Activated CD8-positive, alpha-beta T cell treated with anti-CD3 and anti-CD28 coated beads for 36 hours (primary cell): ENCODE measurements at regions of chrX and their contacts with region 1.

Region 1: DNA sequence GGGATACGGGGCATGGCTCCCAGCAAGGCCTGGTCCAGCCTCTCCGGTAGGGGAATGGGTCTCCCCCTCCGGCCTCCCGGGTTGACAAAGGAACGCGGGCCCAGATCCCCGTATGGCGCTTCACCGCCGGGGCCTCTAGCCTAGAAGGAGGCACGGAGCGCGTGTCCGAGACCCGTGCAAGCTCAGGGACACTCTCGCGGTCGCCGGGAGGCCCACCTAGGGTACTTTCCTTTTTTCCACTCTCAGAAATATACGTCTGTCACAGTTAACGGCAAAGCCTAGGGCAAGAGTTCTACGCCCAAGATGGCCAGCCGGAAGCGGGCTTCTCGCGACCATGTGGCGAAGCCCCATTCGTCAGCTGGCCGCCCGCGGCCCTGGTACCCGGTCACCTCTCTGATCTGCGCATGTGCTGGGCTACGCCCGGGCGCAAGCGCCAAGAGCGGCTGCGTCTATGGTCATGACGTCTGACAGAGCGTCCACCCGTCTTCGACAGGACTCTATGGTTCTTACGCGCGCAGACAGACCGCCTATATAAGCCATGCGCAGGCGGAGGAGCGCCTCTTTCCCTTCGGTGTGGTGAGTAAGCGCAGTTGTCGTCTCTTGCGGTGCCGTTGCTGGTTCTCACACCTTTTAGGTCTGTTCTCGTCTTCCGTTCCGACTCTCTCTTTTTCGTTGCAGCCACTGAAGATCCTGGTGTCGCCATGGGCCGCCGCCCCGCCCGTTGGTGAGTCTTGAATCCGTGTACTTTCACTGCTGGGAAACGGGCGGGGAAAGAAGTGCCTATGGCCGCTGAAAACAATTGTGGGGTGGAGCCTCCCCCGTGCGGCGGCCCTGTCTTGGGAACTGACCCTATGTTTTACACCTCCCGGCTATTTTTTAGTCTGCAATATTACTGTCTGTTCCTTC is at the start of gene RPL10:
- DNase-seq: peak; percentile 93
- ATAC-seq: peak; percentile 84
- H3K4me3 Mint-ChIP-seq: peak within 1 kb of the TSS; percentile 98
- H3K27ac Mint-ChIP-seq: peak within 1 kb of the TSS; percentile 100
- H3K4me1 Mint-ChIP-seq: peaks cover 2% of the 10 kb centered on the region
- H3K27me3 Mint-ChIP-seq: no peaks in the 10 kb centered on the region
- CTCF ChIP-seq: no peak
- total RNA-seq, gene RPL10: 3,574 to 3,675 TPM

Region 2: GRCh38 chrX:154298312-154298711 is 99.8 kb before region 1 on chrX:
- CTCF ChIA-PET with region 1: no interaction called
- POLR2A ChIA-PET with region 1: no interaction called
- intact Hi-C with region 1: no loop called
- DNase-seq: no peak
- ATAC-seq: no peak
- H3K4me3 Mint-ChIP-seq: no peak overlapping the region
- H3K27ac Mint-ChIP-seq: no peak overlapping the region
- H3K4me1 Mint-ChIP-seq: peaks cover 2% of the 10 kb centered on the region
- H3K27me3 Mint-ChIP-seq: no peaks in the 10 kb centered on the region
- CTCF ChIP-seq: no peak

Region 3: GRCh38 chrX:154333837-154334271 is 64.2 kb before region 1 on chrX:
- CTCF ChIA-PET with region 1: no interaction called
- POLR2A ChIA-PET with region 1: no interaction called
- intact Hi-C with region 1: no loop called
- DNase-seq: no peak
- ATAC-seq: peak; percentile 54
- H3K4me3 Mint-ChIP-seq: no peak overlapping the region
- H3K27ac Mint-ChIP-seq: peak overlapping the region; percentile 87
- H3K4me1 Mint-ChIP-seq: peaks cover 28% of the 10 kb centered on the region
- H3K27me3 Mint-ChIP-seq: no peaks in the 10 kb centered on the region
- CTCF ChIP-seq: no peak

Region 4: GRCh38 chrX:154348114-154348531 is 49.9 kb before region 1 on chrX:
- CTCF ChIA-PET with region 1: no interaction called
- POLR2A ChIA-PET with region 1: interaction called, 21 read pairs
- intact Hi-C with region 1: no loop called
- DNase-seq: no peak
- ATAC-seq: no peak
- H3K4me3 Mint-ChIP-seq: no peak overlapping the region
- H3K27ac Mint-ChIP-seq: peak overlapping the region; percentile 66
- H3K4me1 Mint-ChIP-seq: peaks cover 39% of the 10 kb centered on the region
- H3K27me3 Mint-ChIP-seq: no peaks in the 10 kb centered on the region
- CTCF ChIP-seq: no peak

Region 5: GRCh38 chrX:154378782-154379591 is 19.1 kb before region 1 on chrX and contains the start of gene EMD:
- CTCF ChIA-PET with region 1: interaction called, 9 read pairs
- POLR2A ChIA-PET with region 1: interaction called, 30 read pairs
- intact Hi-C with region 1: no loop called
- DNase-seq: peak; percentile 98
- ATAC-seq: peak; percentile 86
- H3K4me3 Mint-ChIP-seq: peak within 1 kb of the TSS; percentile 86
- H3K27ac Mint-ChIP-seq: peak within 1 kb of the TSS; percentile 91
- H3K4me1 Mint-ChIP-seq: peaks cover 18% of the 10 kb centered on the region
- H3K27me3 Mint-ChIP-seq: no peaks in the 10 kb centered on the region
- CTCF ChIP-seq: no peak
- total RNA-seq, gene EMD: 92.4 to 96.6 TPM

Region 6: DNA sequence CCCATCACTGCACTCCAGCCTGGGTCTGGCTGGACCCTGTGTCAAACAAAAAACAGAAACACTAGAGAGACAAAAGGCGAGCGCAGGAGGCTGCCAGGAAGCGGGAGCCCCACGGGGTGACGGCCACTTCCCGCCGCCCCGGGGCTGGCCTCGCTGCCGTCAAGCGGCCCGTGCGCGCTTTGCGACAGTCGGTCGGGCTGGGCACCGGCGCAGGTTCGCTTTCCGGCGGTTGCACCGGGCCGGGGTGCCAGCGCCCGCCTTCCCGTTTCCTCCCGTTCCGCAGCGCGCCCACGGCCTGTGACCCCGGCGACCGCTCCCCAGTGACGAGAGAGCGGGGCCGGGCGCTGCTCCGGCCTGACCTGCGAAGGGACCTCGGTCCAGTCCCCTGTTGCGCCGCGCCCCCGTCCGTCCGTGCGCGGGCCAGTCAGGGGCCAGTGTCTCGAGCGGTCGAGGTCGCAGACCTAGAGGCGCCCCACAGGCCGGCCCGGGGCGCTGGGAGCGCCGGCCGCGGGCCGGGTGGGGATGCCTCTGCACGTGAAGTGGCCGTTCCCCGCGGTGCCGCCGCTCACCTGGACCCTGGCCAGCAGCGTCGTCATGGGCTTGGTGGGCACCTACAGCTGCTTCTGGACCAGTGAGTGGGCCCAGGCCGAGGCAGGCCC is 13.4 kb after region 1 on chrX and contains the start of gene TAFAZZIN:
- CTCF ChIA-PET with region 1: interaction called, 3 read pairs
- POLR2A ChIA-PET with region 1: interaction called, 97 read pairs
- intact Hi-C with region 1: no loop called
- DNase-seq: peak; percentile 80
- ATAC-seq: peak; percentile 83
- H3K4me3 Mint-ChIP-seq: peak within 1 kb of the TSS; percentile 91
- H3K27ac Mint-ChIP-seq: peak within 1 kb of the TSS; percentile 94
- H3K4me1 Mint-ChIP-seq: peaks cover 10% of the 10 kb centered on the region
- H3K27me3 Mint-ChIP-seq: no peaks in the 10 kb centered on the region
- CTCF ChIP-seq: no peak
- total RNA-seq, gene TAFAZZIN: 49.8 to 53.4 TPM

Region 7: GRCh38 chrX:154478728-154479622 is 80.9 kb after region 1 on chrX and contains the start of gene LAGE3:
- CTCF ChIA-PET with region 1: no interaction called
- POLR2A ChIA-PET with region 1: interaction called, 14 read pairs
- intact Hi-C with region 1: no loop called
- DNase-seq: peak; percentile 94
- ATAC-seq: peak; percentile 93
- H3K4me3 Mint-ChIP-seq: peak within 1 kb of the TSS; percentile 75
- H3K27ac Mint-ChIP-seq: peak within 1 kb of the TSS; percentile 92
- H3K4me1 Mint-ChIP-seq: peaks cover 16% of the 10 kb centered on the region
- H3K27me3 Mint-ChIP-seq: no peaks in the 10 kb centered on the region
- CTCF ChIP-seq: no peak
- total RNA-seq, gene LAGE3: 49.8 to 50.1 TPM

Region 8: GRCh38 chrX:154534862-154535670 is 137.0 kb after region 1 on chrX:
- CTCF ChIA-PET with region 1: no interaction called
- POLR2A ChIA-PET with region 1: interaction called, 14 read pairs
- intact Hi-C with region 1: no loop called
- DNase-seq: peak; percentile 89
- ATAC-seq: peak; percentile 98
- H3K4me3 Mint-ChIP-seq: no peak overlapping the region
- H3K27ac Mint-ChIP-seq: peak overlapping the region; percentile 61
- H3K4me1 Mint-ChIP-seq: peaks cover 19% of the 10 kb centered on the region
- H3K27me3 Mint-ChIP-seq: no peaks in the 10 kb centered on the region
- CTCF ChIP-seq: peak; percentile 92